CD4-positive, alpha-beta T cell (primary cell): ENCODE measurements at regions of chrX and their contacts with region 1.

Region 1: GRCh38 chrX:11908371-11908770 is 150.3 kb downstream of the MSL3 start:
- DNase-seq: peak in 6 of 14 experiments; percentile 2 to 47 (median 20)
- ATAC-seq: peak; percentile 56
- H3K4me3 ChIP-seq: no peak overlapping the region
- H3K4me3 Mint-ChIP-seq: no peak overlapping the region
- H3K27ac ChIP-seq: no peak overlapping the region
- H3K27ac Mint-ChIP-seq: no peak overlapping the region
- H3K4me1 ChIP-seq: no peaks in the 10 kb centered on the region
- H3K4me1 Mint-ChIP-seq: peaks cover 12% of the 10 kb centered on the region
- H3K27me3 ChIP-seq: no peaks in the 10 kb centered on the region
- H3K27me3 Mint-ChIP-seq: no peaks in the 10 kb centered on the region
- CTCF ChIP-seq: no peak

Region 2: GRCh38 chrX:11787564-11787963 is 120.8 kb before region 1 on chrX:
- CTCF ChIA-PET with region 1: interaction called, 6 read pairs
- POLR2A ChIA-PET with region 1: interaction called, 3 read pairs
- intact Hi-C with region 1: loop called (anchors 1 to 5 kb)
- DNase-seq: peak; percentile 49 to 85 (median 65)
- ATAC-seq: peak; percentile 85
- H3K4me3 ChIP-seq: peak overlapping the region; percentile 43
- H3K4me3 Mint-ChIP-seq: peak overlapping the region; percentile 84
- H3K27ac ChIP-seq: no peak overlapping the region
- H3K27ac Mint-ChIP-seq: peak overlapping the region; percentile 45
- H3K4me1 ChIP-seq: peaks cover 9% of the 10 kb centered on the region
- H3K4me1 Mint-ChIP-seq: peaks cover 32% of the 10 kb centered on the region
- H3K27me3 ChIP-seq: no peaks in the 10 kb centered on the region
- H3K27me3 Mint-ChIP-seq: no peaks in the 10 kb centered on the region
- CTCF ChIP-seq: no peak